ENCODE measurements at regions of chr12 and their contacts with region 1.

Region 1: GRCh38 chr12:12916135-12916944 is 25.0 kb downstream of the GPRC5A start:
- DNase-seq: peak; percentile 67 to 75 (median 72)
- H3K4me3 ChIP-seq: peak overlapping the region in 1 of 3 experiments; percentile 45
- H3K4me3 Mint-ChIP-seq: peak overlapping the region; percentile 4 to 77
- H3K27ac ChIP-seq: no peak overlapping the region
- H3K27ac Mint-ChIP-seq: no peak overlapping the region
- H3K4me1 ChIP-seq: peaks cover 8 to 9% of the 10 kb centered on the region in 2 donors
- H3K4me1 Mint-ChIP-seq: peaks cover 20% of the 10 kb centered on the region
- H3K27me3 ChIP-seq: no peaks in the 10 kb centered on the region
- H3K27me3 Mint-ChIP-seq: peaks cover 0 to 10% (median 6%) of the 10 kb centered on the region in 3 donors
- CTCF ChIP-seq: peak; percentile 92

Region 2: GRCh38 chr12:12741660-12742059 is 174.7 kb before region 1 on chr12:
- intact Hi-C with region 1: no loop called
- DNase-seq: no peak
- H3K4me3 ChIP-seq: no peak overlapping the region
- H3K4me3 Mint-ChIP-seq: no peak overlapping the region
- H3K27ac ChIP-seq: peak overlapping the region in 1 of 2 donors; percentile 47
- H3K27ac Mint-ChIP-seq: no peak overlapping the region
- H3K4me1 ChIP-seq: peaks cover 4 to 5% of the 10 kb centered on the region in 2 donors
- H3K4me1 Mint-ChIP-seq: peaks cover 10% of the 10 kb centered on the region
- H3K27me3 ChIP-seq: no peaks in the 10 kb centered on the region
- H3K27me3 Mint-ChIP-seq: no peaks in the 10 kb centered on the region
- CTCF ChIP-seq: no peak

Region 3: GRCh38 chr12:12983420-12984035 is 67.2 kb after region 1 on chr12:
- intact Hi-C with region 1: loop called (anchors 5 to 10 kb)
- DNase-seq: no peak
- H3K4me3 ChIP-seq: no peak overlapping the region
- H3K4me3 Mint-ChIP-seq: no peak overlapping the region
- H3K27ac ChIP-seq: no peak overlapping the region
- H3K27ac Mint-ChIP-seq: no peak overlapping the region
- H3K4me1 ChIP-seq: no peaks in the 10 kb centered on the region
- H3K4me1 Mint-ChIP-seq: no peaks in the 10 kb centered on the region
- H3K27me3 ChIP-seq: no peaks in the 10 kb centered on the region
- H3K27me3 Mint-ChIP-seq: peaks cover 0 to 1% (median 0%) of the 10 kb centered on the region in 3 donors
- CTCF ChIP-seq: peak; percentile 57

Region 4: DNA sequence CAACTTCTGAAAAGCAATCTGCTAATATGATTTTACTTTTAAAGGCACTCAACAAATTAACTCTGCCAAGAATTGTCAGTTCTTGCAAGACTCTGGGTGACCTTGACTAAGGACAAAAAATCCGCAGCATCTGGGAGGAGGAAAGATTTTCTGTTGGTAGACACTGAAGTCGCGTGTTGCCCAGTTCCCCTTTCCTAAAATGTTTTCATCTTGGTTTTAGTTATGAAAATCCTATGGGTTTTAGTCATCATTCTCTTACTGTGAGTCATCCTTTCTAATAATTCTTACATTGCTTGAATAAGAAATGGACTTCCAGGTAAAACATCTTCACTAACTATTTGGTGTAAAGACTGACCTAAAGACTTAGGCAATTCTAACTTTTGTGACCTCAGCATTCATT is 178.0 kb after region 1 on chr12:
- intact Hi-C with region 1: loop called in 1 of 2 experiments (anchors 10 kb)
- DNase-seq: peak; percentile 78 to 94 (median 92)
- H3K4me3 ChIP-seq: no peak overlapping the region
- H3K4me3 Mint-ChIP-seq: no peak overlapping the region
- H3K27ac ChIP-seq: peak overlapping the region in 1 of 2 donors; percentile 52
- H3K27ac Mint-ChIP-seq: peak overlapping the region; percentile 50 to 92 (median 76)
- H3K4me1 ChIP-seq: peaks cover 34% of the 10 kb centered on the region in 2 donors
- H3K4me1 Mint-ChIP-seq: peaks cover 47% of the 10 kb centered on the region
- H3K27me3 ChIP-seq: no peaks in the 10 kb centered on the region
- H3K27me3 Mint-ChIP-seq: peaks cover 0 to 7% (median 0%) of the 10 kb centered on the region in 3 donors
- CTCF ChIP-seq: no peak

Region 5: DNA sequence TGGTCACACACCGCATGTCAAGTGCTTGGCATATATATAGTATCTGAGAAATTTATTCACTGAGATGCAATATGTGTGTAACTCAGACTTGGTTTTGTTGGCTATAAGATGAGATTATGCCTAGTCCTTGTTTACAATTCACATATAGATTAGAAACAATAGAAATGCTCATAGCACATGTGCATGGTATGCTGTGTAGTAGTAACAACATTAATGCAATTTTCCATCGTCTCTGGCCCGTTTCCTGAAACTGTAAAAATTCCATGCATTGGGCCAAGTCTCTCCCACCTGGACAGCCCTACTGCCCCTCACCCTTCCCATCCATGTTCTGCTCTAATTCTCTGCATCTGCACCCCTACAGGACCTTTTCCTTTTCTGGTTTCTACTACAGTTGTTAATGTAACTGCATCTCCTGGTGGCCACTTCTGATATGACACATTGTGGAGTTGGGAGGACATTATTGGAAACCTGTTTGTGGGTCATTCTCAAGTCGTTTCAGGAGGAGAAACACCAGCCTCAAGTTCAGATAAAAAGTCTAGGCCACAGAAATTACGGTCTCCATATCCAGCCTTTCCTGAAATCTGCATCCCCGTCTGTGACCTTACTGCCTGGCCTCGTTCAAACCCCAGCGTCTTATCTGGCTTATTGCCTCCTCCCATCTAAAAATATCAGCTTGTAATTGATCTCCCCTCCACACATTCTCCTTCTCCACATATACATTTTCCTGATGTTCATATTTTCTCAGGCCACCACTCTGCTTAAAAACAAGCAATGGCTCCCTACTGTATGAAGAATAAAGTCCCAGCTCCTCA is 317.7 kb after region 1 on chr12:
- intact Hi-C with region 1: loop called (anchors 5 kb)
- DNase-seq: peak; percentile 4 to 32 (median 16)
- H3K4me3 ChIP-seq: no peak overlapping the region
- H3K4me3 Mint-ChIP-seq: no peak overlapping the region
- H3K27ac ChIP-seq: no peak overlapping the region
- H3K27ac Mint-ChIP-seq: peak overlapping the region in 1 of 7 donors; percentile 48
- H3K4me1 ChIP-seq: no peaks in the 10 kb centered on the region
- H3K4me1 Mint-ChIP-seq: no peaks in the 10 kb centered on the region
- H3K27me3 ChIP-seq: no peaks in the 10 kb centered on the region
- H3K27me3 Mint-ChIP-seq: peaks cover 2 to 3% (median 2%) of the 10 kb centered on the region in 3 donors
- CTCF ChIP-seq: peak; percentile 82

Measured in CD14-positive monocyte (primary cell).